ENCODE measurements at regions of chr17 and their contacts with region 1.

Region 1: DNA sequence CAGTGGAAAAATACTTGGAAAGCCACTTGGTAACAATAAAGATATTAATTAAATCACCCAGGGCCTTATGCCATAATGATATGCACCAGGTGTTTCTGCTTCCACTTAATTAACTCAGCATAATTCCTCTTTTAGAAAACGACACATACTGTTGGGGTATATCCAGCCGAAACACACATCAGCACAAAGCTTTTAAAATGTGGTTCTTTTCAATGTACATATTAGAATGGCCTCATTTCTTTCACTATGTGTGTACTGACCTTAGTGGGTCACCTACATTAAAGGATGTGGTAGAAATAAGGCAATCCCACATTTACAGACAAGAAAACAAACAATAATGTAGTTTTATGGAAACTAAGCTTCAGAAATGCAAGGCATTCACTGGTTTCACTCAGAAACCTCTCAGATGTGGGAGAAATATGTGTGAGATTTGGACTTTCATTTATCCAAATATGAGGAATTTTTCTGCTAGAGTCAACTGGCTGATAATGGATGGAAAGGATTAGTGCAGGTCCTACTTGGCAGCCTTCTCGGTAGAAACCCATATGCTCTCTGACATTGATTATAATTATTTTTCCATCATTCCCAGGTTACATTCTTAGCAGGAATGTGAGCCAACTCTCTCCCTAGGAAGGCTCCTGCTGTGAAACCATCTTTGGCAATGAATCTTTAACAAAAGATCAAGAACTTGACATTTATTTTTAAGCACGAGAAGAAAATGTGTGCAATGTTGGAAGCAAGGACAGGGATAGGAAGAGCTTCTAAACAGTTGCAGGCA is 66.7 kb upstream of the DHX40 start:
- DNase-seq: peak; percentile 84
- H3K4me3 ChIP-seq: no peak overlapping the region
- CTCF ChIP-seq: no peak

Region 2: DNA sequence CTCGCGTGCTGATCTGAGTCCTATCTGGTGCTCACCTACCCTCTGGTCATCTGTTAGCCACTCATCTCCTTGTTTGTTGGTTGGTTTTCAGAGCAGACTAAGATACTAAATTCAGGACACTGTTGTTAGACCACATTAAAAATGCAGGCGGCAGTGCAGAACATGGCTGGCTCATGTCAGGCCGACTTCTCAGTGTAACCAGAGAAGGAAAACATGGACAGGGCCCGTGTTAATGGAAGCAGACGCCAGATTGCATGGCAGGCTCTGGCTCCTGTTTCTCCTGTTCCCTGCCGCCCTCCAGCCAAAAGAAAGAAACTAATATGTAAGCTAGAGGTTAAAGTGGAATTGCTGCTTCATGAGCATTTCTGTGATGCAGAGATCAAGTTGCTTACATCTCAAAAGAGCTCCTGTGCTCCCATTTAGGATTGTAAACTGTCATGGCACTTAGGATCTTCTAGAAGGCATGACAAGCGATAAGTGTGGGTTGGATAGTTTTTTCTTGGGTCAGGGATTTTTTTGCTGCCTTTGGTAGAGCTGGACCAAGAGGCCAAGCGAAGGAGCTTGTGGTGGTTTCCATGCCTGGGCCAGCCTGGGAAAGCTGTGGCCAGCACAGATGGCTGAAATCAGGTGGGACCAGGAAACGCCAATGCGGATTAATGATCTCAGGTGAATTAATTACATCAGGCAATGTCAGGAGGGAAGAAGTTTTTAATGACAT is 111.2 kb before region 1 on chr17:
- in situ Hi-C with region 1: no loop called
- DNase-seq: no peak
- H3K4me3 ChIP-seq: no peak overlapping the region
- CTCF ChIP-seq: no peak

Region 3: DNA sequence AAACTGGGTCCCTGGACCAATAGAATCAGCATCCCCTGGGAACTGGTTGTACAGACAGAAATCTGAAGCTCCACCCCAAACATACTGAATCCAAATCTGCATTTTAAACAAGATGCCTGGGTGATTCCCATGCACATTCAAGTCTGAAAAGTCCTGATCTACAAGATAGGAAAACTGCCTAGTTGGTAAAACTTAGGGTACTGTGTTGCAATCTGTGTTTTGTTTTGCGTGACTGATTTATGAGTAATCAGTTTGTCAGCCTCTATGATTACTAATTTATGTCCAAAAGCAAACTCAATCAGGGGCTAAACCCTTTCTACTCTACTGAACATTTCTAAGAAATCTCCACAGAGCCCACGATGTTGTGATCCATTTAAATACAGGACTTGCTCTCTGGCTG is 63.5 kb before region 1 on chr17:
- in situ Hi-C with region 1: loop called (anchors 10 kb)
- DNase-seq: peak; percentile 33
- H3K4me3 ChIP-seq: no peak overlapping the region
- CTCF ChIP-seq: no peak

Measured in astrocyte of the cerebellum (primary cell).